ENCODE measurements at regions of chr1 and their contacts with region 1.

Region 1: DNA sequence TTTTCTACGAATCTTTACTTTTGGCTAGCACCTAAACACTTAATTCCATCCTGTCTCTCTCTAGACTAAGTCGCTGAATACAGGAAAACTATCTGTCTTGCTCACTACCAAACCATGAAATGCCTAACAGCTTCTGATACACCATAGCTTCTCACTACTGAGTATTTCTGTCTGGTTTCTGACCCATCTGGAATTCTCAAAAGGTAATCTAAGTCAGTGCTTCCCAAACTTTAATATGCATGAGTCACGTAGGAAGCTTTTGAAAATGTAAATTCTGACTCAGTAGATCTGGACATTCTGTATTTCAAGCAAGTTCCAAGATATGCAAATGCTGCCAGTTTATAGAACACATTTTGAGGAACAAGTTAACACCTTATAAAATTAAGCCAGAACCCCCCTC is 9.2 kb upstream of the OVGP1 start:
- DNase-seq: no peak
- H3K4me3 ChIP-seq: no peak overlapping the region
- H3K27ac ChIP-seq: no peak overlapping the region
- H3K4me1 ChIP-seq: no peaks in the 10 kb centered on the region
- H3K27me3 ChIP-seq: no peaks in the 10 kb centered on the region
- CTCF ChIP-seq: no peak
- EP300 ChIP-seq: no peak
- POLR2A ChIP-seq: no peak
- RAD21 ChIP-seq: no peak

Region 2: DNA sequence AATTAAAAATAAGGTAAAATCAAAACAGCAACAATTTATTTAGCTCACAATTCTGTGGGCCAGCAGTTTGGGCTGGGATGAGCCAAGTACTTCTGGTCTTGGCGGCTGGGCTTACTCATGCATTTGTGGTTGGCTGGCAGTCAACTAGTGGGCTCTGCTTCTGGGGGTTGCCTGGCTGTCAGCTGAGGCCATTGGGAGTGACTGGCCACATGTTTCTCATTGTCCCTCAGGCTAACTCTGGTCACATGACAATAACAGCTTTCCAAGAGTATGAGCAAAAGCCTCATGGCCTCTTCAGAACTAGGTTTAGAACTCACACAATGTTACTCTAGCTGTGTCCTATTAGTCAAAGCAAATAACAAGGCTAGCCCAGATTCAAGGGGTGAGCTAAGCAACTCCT is 161.6 kb before region 1 on chr1:
- CTCF ChIA-PET with region 1: no interaction called
- POLR2A ChIA-PET with region 1: no interaction called
- DNase-seq: no peak
- H3K4me3 ChIP-seq: no peak overlapping the region
- H3K27ac ChIP-seq: no peak overlapping the region
- H3K4me1 ChIP-seq: peaks cover 0 to 13% (median 6%) of the 10 kb centered on the region in 4 experiments; a peak in 4 of 7 replicates
- H3K27me3 ChIP-seq: peaks cover 0 to 12% (median 7%) of the 10 kb centered on the region in 4 experiments; a peak in 4 of 7 replicates
- CTCF ChIP-seq: no peak
- EP300 ChIP-seq: no peak
- POLR2A ChIP-seq: no peak
- RAD21 ChIP-seq: no peak

Region 3: GRCh38 chr1:111422566-111423391 is 13.9 kb before region 1 on chr1:
- CTCF ChIA-PET with region 1: interaction called, 8 read pairs
- POLR2A ChIA-PET with region 1: interaction called, 27 read pairs
- DNase-seq: no peak
- H3K4me3 ChIP-seq: no peak overlapping the region
- H3K27ac ChIP-seq: no peak overlapping the region
- H3K4me1 ChIP-seq: no peaks in the 10 kb centered on the region
- H3K27me3 ChIP-seq: no peaks in the 10 kb centered on the region; a peak in 1 of 7 replicates
- CTCF ChIP-seq: no peak
- EP300 ChIP-seq: no peak
- POLR2A ChIP-seq: no peak
- RAD21 ChIP-seq: no peak

Region 4: GRCh38 chr1:111448918-111449702 is 12.4 kb after region 1 on chr1 and contains the starts of genes ATP5PB and WDR77:
- CTCF ChIA-PET with region 1: interaction called, 3 read pairs
- POLR2A ChIA-PET with region 1: interaction called, 36 read pairs
- DNase-seq: peak; percentile 83 to 94
- H3K4me3 ChIP-seq: peak within 1 kb of the TSS; percentile 86 to 100 (median 99)
- H3K27ac ChIP-seq: peak within 1 kb of the TSS; percentile 85
- H3K4me1 ChIP-seq: peaks cover 0 to 2% (median 1%) of the 10 kb centered on the region in 4 experiments; a peak in 3 of 7 replicates
- H3K27me3 ChIP-seq: no peaks in the 10 kb centered on the region
- CTCF ChIP-seq: no peak
- EP300 ChIP-seq: no peak
- POLR2A ChIP-seq: peak; percentile 2 to 58; a peak in 2 of 3 replicates
- RAD21 ChIP-seq: no peak
- total RNA-seq, gene ATP5PB: 252 and 262 TPM in 2 replicates
- total RNA-seq, gene WDR77: 61.6 and 66.0 TPM in 2 replicates

Measured in H1 (cell line).